Astrocyte of the cerebellum (primary cell): ENCODE measurements at regions of chr7 and their contacts with region 1.

Region 1: GRCh38 chr7:128209229-128210035 is 31.6 kb upstream of the LEP start:
- DNase-seq: peak; percentile 64
- H3K4me3 ChIP-seq: no peak overlapping the region
- CTCF ChIP-seq: peak; percentile 97

Region 2: GRCh38 chr7:127585044-127585953 is 624.1 kb before region 1 on chr7 and contains the start of gene GCC1:
- in situ Hi-C with region 1: loop called (anchors 25 kb)
- DNase-seq: peak; percentile 55
- H3K4me3 ChIP-seq: peak within 1 kb of the TSS; percentile 89
- CTCF ChIP-seq: no peak

Region 3: GRCh38 chr7:127708788-127709187 is 500.6 kb before region 1 on chr7:
- in situ Hi-C with region 1: loop called (anchors 25 kb)
- DNase-seq: peak; percentile 89
- H3K4me3 ChIP-seq: no peak overlapping the region
- CTCF ChIP-seq: peak; percentile 67

Region 4: GRCh38 chr7:128150223-128150865 is 59.1 kb before region 1 on chr7:
- in situ Hi-C with region 1: no loop called
- DNase-seq: no peak
- H3K4me3 ChIP-seq: no peak overlapping the region
- CTCF ChIP-seq: no peak

Region 5: GRCh38 chr7:128259131-128259800 is 49.8 kb after region 1 on chr7:
- in situ Hi-C with region 1: no loop called
- DNase-seq: no peak
- H3K4me3 ChIP-seq: no peak overlapping the region
- CTCF ChIP-seq: no peak